A673 (cell line): ENCODE measurements at regions of chr6 and their contacts with region 1.

Region 1: GRCh38 chr6:36123257-36124139 is 6.8 kb upstream of the MAPK13 start:
- DNase-seq: peak; percentile 93
- H3K4me3 ChIP-seq: no peak overlapping the region
- H3K27ac ChIP-seq: no peak overlapping the region
- H3K4me1 ChIP-seq: no peaks in the 10 kb centered on the region
- H3K27me3 ChIP-seq: no peaks in the 10 kb centered on the region
- CTCF ChIP-seq: peak; percentile 73

Region 2: DNA sequence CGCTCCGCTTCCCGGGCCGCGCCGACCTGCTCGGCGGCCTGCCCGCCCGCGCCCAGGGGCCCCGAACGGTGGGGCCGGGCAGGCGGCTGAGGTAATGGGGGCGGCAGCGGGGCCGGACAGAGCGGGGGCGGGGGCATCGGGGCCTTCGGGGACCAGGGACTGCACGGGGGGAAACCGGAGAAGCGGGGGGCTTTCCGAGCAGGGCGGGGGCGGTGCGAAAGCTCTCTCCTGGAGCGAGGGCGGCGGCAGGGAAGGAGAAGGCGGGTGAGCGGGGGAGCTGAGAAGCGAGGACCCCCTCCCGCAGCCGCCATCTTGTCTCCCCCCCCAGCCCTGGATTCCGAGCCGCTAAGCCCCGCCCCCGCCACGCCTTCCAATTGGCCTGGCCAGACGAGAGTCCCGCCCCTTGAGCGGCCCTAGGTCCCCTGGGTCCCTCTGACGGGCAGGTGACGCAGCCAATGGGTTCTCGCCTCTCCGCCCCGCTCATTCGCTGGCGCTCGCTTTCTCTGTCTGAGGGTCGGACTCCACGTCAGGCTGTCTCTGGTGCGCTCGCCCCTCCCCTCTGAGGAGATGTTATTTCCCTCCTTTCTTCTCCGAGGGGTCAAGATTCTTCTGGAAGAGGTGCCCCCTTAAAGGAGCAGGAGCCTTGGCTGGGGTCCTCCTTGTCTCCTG is 73.5 kb after region 1 on chr6:
- CTCF ChIA-PET with region 1: no interaction called
- POLR2A ChIA-PET with region 1: no interaction called
- intact Hi-C with region 1: loop called (anchors 10 kb)
- DNase-seq: peak; percentile 98
- H3K4me3 ChIP-seq: peak overlapping the region; percentile 70
- H3K27ac ChIP-seq: peak overlapping the region; percentile 96
- H3K4me1 ChIP-seq: peaks cover 8% of the 10 kb centered on the region
- H3K27me3 ChIP-seq: no peaks in the 10 kb centered on the region
- CTCF ChIP-seq: no peak

Region 3: GRCh38 chr6:36360241-36361054 is 236.9 kb after region 1 on chr6:
- CTCF ChIA-PET with region 1: no interaction called
- POLR2A ChIA-PET with region 1: no interaction called
- intact Hi-C with region 1: loop called (anchors 2 kb)
- DNase-seq: peak; percentile 87
- H3K4me3 ChIP-seq: no peak overlapping the region
- H3K27ac ChIP-seq: no peak overlapping the region
- H3K4me1 ChIP-seq: no peaks in the 10 kb centered on the region
- H3K27me3 ChIP-seq: no peaks in the 10 kb centered on the region
- CTCF ChIP-seq: peak; percentile 85

Region 4: DNA sequence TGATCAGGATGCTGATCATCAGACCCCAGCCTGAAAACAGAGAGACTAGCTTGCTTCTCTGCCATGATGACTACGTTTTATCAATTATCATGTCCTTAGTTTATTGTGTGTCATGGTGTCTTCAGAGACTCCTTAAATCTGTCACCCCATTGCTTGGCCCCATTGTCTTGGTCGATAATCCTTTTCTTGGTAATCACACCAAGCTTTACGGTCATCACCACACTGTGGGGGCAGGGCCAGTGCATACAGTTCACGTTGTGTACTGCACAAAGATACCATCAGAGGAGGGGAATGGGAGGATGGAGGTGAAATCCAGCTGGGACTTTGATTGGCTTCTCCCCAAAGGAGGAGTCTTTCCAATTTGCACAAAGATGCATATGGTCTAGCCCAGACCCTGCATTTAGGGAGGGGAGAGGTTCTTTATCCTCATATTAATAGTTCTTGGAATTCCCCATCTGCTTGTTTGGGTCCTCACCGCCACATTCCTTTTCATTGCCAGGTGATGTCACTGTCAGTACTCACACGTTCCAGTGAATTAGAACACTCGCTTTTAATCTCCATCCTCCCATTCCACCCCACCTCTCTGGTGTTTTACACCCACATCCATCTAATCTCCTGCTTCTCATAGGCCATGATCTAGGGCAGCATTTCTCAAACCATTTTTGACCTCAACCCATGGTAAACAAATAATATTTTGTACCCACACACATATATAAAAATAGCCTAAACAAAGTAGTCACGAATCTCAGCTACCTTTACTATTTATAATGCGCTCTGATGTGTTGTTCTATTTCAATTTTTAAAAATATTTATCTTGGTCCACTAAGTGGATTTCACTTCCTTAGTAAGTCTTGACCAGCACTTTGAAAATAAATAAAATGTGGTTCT is 258.2 kb after region 1 on chr6:
- CTCF ChIA-PET with region 1: interaction called, 10 read pairs
- POLR2A ChIA-PET with region 1: no interaction called
- intact Hi-C with region 1: no loop called
- DNase-seq: no peak
- H3K4me3 ChIP-seq: no peak overlapping the region
- H3K27ac ChIP-seq: no peak overlapping the region
- H3K4me1 ChIP-seq: no peaks in the 10 kb centered on the region
- H3K27me3 ChIP-seq: no peaks in the 10 kb centered on the region
- CTCF ChIP-seq: no peak